ENCODE measurements at regions of chr7 and their contacts with region 1.

Region 1: DNA sequence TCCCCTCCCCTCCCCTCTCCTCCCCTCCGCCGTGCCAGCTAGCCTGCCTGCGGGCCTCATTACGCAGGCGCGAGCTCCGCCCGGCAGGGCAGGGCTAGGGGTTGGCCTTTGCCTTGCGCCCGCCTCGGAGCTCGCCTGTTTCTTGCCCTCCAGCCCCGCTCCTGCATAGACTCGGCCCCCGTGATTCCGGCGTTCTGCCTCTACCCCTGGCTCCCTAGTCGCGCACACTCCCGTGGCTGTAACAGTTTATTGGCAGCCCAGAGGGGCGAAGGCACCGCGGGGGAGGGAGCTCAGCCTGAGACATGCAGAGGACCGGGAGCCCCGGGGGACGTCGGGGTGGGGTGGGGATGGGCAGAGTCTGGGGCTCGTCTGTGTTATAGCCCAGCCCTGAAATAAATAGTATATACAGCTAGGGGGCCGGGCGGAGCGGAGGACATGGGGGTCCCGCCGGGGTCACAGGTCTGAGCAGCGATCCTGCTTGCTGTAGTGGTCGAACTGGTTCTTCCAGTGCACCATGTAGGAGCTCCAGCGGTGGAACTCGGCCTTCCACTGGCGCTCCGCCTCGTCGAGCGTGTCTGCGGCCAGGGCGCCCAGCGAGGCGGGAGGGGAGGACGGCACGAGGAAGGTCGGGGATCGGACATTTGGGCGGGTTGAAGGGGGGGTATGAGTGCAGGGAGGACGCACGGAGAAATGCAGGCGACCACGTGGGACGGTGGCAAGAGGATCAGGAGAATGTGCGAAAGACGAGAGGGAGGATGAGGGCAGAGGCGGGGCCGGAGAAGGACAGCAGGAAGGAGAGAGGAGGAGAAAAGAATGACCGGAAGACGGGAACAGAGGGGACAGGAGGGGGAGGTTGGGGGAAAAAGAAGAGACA is 483 bp upstream of the UFSP1 start:
- DNase-seq: peak; percentile 82 to 97 (median 90)
- ATAC-seq: peak; percentile 87
- H3K4me3 ChIP-seq: peak overlapping the region; percentile 73
- H3K4me3 Mint-ChIP-seq: peak overlapping the region; percentile 95
- H3K27ac ChIP-seq: peak overlapping the region in 1 of 2 donors; percentile 50
- H3K27ac Mint-ChIP-seq: peak overlapping the region; percentile 66
- H3K4me1 ChIP-seq: peaks cover 68% of the 10 kb centered on the region
- H3K4me1 Mint-ChIP-seq: peaks cover 52% of the 10 kb centered on the region
- H3K27me3 ChIP-seq: peaks cover 24 to 41% of the 10 kb centered on the region in 2 experiments
- H3K27me3 Mint-ChIP-seq: peaks cover 36% of the 10 kb centered on the region
- CTCF ChIP-seq: no peak

Region 2: GRCh38 chr7:100874577-100875355 is 15.2 kb before region 1 on chr7 and contains the start of gene SRRT:
- CTCF ChIA-PET with region 1: interaction called, 3 read pairs
- POLR2A ChIA-PET with region 1: interaction called, 206 read pairs
- intact Hi-C with region 1: loop called (anchors 1 to 2 kb)
- DNase-seq: peak; percentile 98 to 99 (median 98)
- ATAC-seq: peak; percentile 95
- H3K4me3 ChIP-seq: peak within 1 kb of the TSS; percentile 96
- H3K4me3 Mint-ChIP-seq: peak within 1 kb of the TSS; percentile 100
- H3K27ac ChIP-seq: peak within 1 kb of the TSS; percentile 91
- H3K27ac Mint-ChIP-seq: peak within 1 kb of the TSS; percentile 96
- H3K4me1 ChIP-seq: peaks cover 48% of the 10 kb centered on the region
- H3K4me1 Mint-ChIP-seq: peaks cover 49% of the 10 kb centered on the region
- H3K27me3 ChIP-seq: no peaks in the 10 kb centered on the region
- H3K27me3 Mint-ChIP-seq: no peaks in the 10 kb centered on the region
- CTCF ChIP-seq: no peak
- total RNA-seq, gene SRRT: 355 to 382 TPM

Region 3: DNA sequence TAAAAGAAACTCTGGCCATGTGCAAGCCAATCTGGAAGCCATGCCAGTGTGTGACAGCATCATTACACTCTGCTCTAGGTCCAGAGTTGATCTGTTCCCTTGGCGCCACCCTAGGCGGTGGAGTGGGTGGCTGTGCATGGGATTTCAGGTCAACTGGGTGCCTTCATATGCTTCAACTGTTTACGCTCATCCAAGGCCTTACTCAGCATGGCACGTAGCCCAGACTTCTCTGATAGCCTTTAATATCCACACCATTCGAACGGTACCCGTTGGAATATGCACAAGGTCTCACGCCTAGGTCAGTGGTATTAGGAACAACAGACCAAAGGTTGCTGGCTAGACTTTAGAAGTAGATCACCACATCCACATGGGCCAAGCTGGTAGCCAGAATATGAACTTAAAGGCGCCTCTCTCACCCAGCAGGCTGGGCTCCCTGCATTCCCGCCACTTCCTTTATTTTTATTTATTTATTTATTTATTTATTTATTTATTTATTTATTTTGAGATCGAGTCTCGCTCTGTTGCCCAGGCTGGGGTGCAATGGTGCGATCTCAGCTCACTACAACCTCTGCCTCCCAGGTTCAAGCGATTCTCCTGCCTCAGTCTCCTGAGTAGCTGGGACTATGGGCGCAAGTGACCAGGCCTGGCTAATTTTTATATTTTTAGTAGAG is 24.3 kb after region 1 on chr7:
- CTCF ChIA-PET with region 1: no interaction called
- POLR2A ChIA-PET with region 1: no interaction called
- intact Hi-C with region 1: no loop called
- DNase-seq: no peak
- ATAC-seq: no peak
- H3K4me3 ChIP-seq: no peak overlapping the region
- H3K4me3 Mint-ChIP-seq: no peak overlapping the region
- H3K27ac ChIP-seq: no peak overlapping the region
- H3K27ac Mint-ChIP-seq: no peak overlapping the region
- H3K4me1 ChIP-seq: no peaks in the 10 kb centered on the region
- H3K4me1 Mint-ChIP-seq: no peaks in the 10 kb centered on the region
- H3K27me3 ChIP-seq: peaks cover 2 to 7% of the 10 kb centered on the region in 2 experiments
- H3K27me3 Mint-ChIP-seq: peaks cover 27% of the 10 kb centered on the region
- CTCF ChIP-seq: no peak

Region 4: GRCh38 chr7:100974018-100974417 is 84.0 kb after region 1 on chr7:
- CTCF ChIA-PET with region 1: no interaction called
- POLR2A ChIA-PET with region 1: no interaction called
- intact Hi-C with region 1: no loop called
- DNase-seq: no peak
- ATAC-seq: no peak
- H3K4me3 ChIP-seq: no peak overlapping the region
- H3K4me3 Mint-ChIP-seq: no peak overlapping the region
- H3K27ac ChIP-seq: no peak overlapping the region
- H3K27ac Mint-ChIP-seq: no peak overlapping the region
- H3K4me1 ChIP-seq: no peaks in the 10 kb centered on the region
- H3K4me1 Mint-ChIP-seq: no peaks in the 10 kb centered on the region
- H3K27me3 ChIP-seq: peaks cover 0 to 11% of the 10 kb centered on the region in 2 experiments
- H3K27me3 Mint-ChIP-seq: peaks cover 39% of the 10 kb centered on the region
- CTCF ChIP-seq: no peak

Region 5: GRCh38 chr7:101077303-101078089 is 187.5 kb after region 1 on chr7:
- CTCF ChIA-PET with region 1: interaction called, 6 read pairs
- POLR2A ChIA-PET with region 1: no interaction called
- intact Hi-C with region 1: loop called (anchors 5 kb)
- DNase-seq: peak; percentile 70 to 89 (median 80)
- ATAC-seq: peak; percentile 99
- H3K4me3 ChIP-seq: no peak overlapping the region
- H3K4me3 Mint-ChIP-seq: no peak overlapping the region
- H3K27ac ChIP-seq: no peak overlapping the region
- H3K27ac Mint-ChIP-seq: no peak overlapping the region
- H3K4me1 ChIP-seq: peaks cover 5% of the 10 kb centered on the region
- H3K4me1 Mint-ChIP-seq: peaks cover 7% of the 10 kb centered on the region
- H3K27me3 ChIP-seq: no peaks in the 10 kb centered on the region
- H3K27me3 Mint-ChIP-seq: peaks cover 11% of the 10 kb centered on the region
- CTCF ChIP-seq: peak; percentile 87

Region 6: GRCh38 chr7:101165075-101165957 is 275.3 kb after region 1 on chr7 and contains the start of gene VGF:
- CTCF ChIA-PET with region 1: no interaction called
- POLR2A ChIA-PET with region 1: no interaction called
- intact Hi-C with region 1: loop called in 1 of 2 experiments (anchors 5 kb)
- DNase-seq: peak; percentile 85 to 97 (median 92)
- ATAC-seq: peak; percentile 85
- H3K4me3 ChIP-seq: peak within 1 kb of the TSS; percentile 19
- H3K4me3 Mint-ChIP-seq: peak within 1 kb of the TSS; percentile 74
- H3K27ac ChIP-seq: no peak within 1 kb of the TSS
- H3K27ac Mint-ChIP-seq: peak within 1 kb of the TSS; percentile 14
- H3K4me1 ChIP-seq: peaks cover 58% of the 10 kb centered on the region
- H3K4me1 Mint-ChIP-seq: peaks cover 43% of the 10 kb centered on the region
- H3K27me3 ChIP-seq: peaks cover 78 to 83% of the 10 kb centered on the region in 2 experiments
- H3K27me3 Mint-ChIP-seq: peaks cover 80% of the 10 kb centered on the region
- CTCF ChIP-seq: no peak
- total RNA-seq, gene VGF: not detected

Region 7: GRCh38 chr7:101287032-101287431 is 397.0 kb after region 1 on chr7:
- CTCF ChIA-PET with region 1: interaction called, 6 read pairs
- POLR2A ChIA-PET with region 1: no interaction called
- intact Hi-C with region 1: loop called in 1 of 2 experiments (anchors 10 kb)
- DNase-seq: peak in 1 of 14 experiments; percentile 26
- ATAC-seq: no peak
- H3K4me3 ChIP-seq: no peak overlapping the region
- H3K4me3 Mint-ChIP-seq: no peak overlapping the region
- H3K27ac ChIP-seq: no peak overlapping the region
- H3K27ac Mint-ChIP-seq: no peak overlapping the region
- H3K4me1 ChIP-seq: peaks cover 13% of the 10 kb centered on the region
- H3K4me1 Mint-ChIP-seq: peaks cover 8% of the 10 kb centered on the region
- H3K27me3 ChIP-seq: peaks cover 4 to 6% of the 10 kb centered on the region in 2 experiments
- H3K27me3 Mint-ChIP-seq: peaks cover 26% of the 10 kb centered on the region
- CTCF ChIP-seq: no peak

Measured in CD4-positive, alpha-beta T cell (primary cell).